Heart right ventricle (tissue), 16 donors: ENCODE measurements at regions of chr17 and their contacts with region 1.

Region 1: GRCh38 chr17:52106638-52107261 is 51.8 kb downstream of the CA10 start:
- DNase-seq: peak in 1 of 2 donors; percentile 8
- ATAC-seq: no peak
- H3K4me3 ChIP-seq: no peak overlapping the region
- H3K27ac ChIP-seq: no peak overlapping the region
- H3K4me1 ChIP-seq: no peaks in the 10 kb centered on the region
- H3K27me3 ChIP-seq: peaks cover 0 to 18% (median 3%) of the 10 kb centered on the region in 7 donors
- CTCF ChIP-seq: peak; percentile 26 to 81 (median 74)

Region 2: DNA sequence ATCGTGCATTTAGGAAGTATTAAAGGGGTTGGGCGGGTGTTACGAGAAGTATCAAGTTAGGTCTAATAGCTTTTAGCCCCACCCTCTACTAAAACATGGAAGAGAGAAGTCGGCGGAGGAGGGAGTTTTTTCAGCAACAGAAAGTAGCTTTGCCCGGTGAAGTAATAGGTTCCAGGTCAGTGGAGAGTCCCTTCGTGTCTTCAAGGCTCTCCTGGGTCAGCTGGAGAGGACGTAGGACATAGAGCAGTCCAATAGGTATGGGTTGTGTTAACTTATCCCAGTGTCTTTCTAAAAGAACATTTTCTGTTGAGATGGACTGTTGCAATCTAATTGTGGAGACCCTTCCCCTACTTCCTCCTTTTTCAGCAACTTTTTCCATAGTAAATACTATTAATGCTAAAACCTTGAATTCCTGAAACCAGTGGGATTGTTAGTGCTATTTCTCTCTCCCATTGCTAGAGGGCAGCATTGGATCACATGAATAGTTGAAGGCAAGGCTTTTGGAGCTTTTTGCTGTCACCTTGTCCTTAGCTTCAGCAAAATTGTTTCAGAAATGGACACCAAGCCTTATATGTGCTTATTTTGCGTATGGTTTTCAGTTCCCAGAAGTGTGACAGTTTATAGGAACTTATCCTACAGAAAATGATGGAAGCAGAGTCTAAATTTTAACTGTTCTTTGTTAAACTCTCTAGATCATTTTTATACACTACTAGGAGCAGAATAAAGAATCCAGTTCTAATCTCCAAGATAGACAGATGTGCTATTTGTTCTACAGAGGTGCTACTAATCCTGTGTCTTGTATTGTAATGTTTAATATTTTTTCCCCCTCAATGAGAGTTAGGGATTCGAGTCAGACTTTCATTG is 808.0 kb before region 1 on chr17:
- intact Hi-C with region 1: loop called in 1 of 10 experiments (anchors 5 kb)
- DNase-seq: no peak
- ATAC-seq: no peak
- H3K4me3 ChIP-seq: no peak overlapping the region
- H3K27ac ChIP-seq: no peak overlapping the region
- H3K4me1 ChIP-seq: no peaks in the 10 kb centered on the region
- H3K27me3 ChIP-seq: no peaks in the 10 kb centered on the region
- CTCF ChIP-seq: peak; percentile 23 to 74 (median 60)

Region 3: DNA sequence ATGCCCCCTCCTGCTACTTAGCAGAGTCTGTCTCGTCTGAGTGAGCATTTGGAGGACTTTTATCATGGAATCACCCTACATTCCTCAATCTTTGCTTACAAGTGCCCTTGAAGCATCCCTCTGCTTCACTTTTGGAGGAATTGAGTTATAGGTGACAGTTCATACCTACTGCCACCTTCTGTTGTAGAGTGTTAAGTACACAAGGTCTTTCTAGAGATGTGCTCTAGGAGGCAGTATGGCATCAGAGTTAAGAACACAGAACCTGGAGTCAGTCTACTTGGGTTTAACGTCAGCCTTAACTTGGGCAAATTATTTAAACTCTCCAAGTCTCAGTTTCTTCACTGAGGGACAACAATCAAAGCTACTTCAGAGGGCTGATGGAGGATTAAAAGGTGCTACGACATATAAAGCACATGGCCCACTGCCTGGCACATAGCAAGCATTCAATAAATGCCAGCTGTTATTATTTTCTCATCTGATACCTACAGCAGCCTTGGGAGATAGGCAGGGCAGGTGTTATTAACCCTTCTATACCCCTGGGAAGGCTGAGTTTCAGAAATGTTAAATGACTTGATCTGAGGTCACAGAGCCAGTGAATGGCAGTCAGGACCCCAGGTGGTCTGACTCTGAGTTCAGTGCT is 784.2 kb before region 1 on chr17:
- intact Hi-C with region 1: loop called in 1 of 10 experiments (anchors 10 kb)
- DNase-seq: no peak
- ATAC-seq: no peak
- H3K4me3 ChIP-seq: no peak overlapping the region
- H3K27ac ChIP-seq: no peak overlapping the region
- H3K4me1 ChIP-seq: no peaks in the 10 kb centered on the region
- H3K27me3 ChIP-seq: peaks cover 0 to 16% (median 0%) of the 10 kb centered on the region in 7 donors
- CTCF ChIP-seq: peak in 5 of 9 donors; percentile 16 to 39 (median 19)

Region 4: GRCh38 chr17:51585514-51586104 is 521.1 kb before region 1 on chr17:
- intact Hi-C with region 1: loop called in 1 of 10 experiments (anchors 10 kb)
- DNase-seq: no peak
- ATAC-seq: no peak
- H3K4me3 ChIP-seq: no peak overlapping the region
- H3K27ac ChIP-seq: no peak overlapping the region
- H3K4me1 ChIP-seq: no peaks in the 10 kb centered on the region
- H3K27me3 ChIP-seq: peaks cover 0 to 11% (median 0%) of the 10 kb centered on the region in 7 donors
- CTCF ChIP-seq: peak; percentile 16 to 68 (median 44)

Region 5: DNA sequence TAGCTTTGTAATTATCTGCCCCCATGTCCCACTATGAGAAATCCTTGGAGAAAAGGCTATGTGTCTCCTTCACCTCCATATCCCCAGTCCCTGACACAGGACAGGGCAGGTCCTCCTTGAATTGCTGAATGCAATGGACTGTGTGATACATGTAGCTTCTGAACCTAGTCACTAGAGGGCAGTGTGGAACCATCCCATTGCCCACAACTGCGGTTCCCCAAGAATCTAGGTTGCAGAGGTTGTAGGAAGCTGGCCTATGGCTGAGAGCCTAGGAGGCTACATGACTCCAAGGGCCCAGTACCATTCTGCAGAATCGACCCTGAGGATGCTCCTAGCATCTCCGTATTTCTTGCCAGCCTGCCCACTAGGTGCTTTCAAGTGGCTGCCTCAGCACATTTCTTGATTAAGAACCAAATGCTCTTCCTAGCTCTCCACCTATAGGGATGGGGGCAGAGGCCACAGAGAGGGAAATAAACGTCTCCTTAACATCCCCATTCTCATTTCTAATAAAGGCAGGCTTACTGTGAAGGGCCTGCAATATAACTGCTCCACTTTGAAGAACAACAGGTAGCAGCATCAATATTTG is 342.3 kb before region 1 on chr17:
- intact Hi-C with region 1: loop called in 9 of 10 experiments (anchors 5 to 10 kb)
- DNase-seq: peak in 1 of 2 donors; percentile 32
- ATAC-seq: peak in 6 of 8 donors; percentile 60 to 83 (median 70)
- H3K4me3 ChIP-seq: no peak overlapping the region
- H3K27ac ChIP-seq: no peak overlapping the region
- H3K4me1 ChIP-seq: no peaks in the 10 kb centered on the region
- H3K27me3 ChIP-seq: peaks cover 0 to 44% (median 14%) of the 10 kb centered on the region in 7 donors
- CTCF ChIP-seq: peak; percentile 45 to 88 (median 80)

Region 6: GRCh38 chr17:51869387-51869786 is 237.4 kb before region 1 on chr17:
- intact Hi-C with region 1: no loop called
- DNase-seq: no peak
- ATAC-seq: no peak
- H3K4me3 ChIP-seq: no peak overlapping the region
- H3K27ac ChIP-seq: no peak overlapping the region
- H3K4me1 ChIP-seq: no peaks in the 10 kb centered on the region
- H3K27me3 ChIP-seq: no peaks in the 10 kb centered on the region
- CTCF ChIP-seq: no peak

Region 7: DNA sequence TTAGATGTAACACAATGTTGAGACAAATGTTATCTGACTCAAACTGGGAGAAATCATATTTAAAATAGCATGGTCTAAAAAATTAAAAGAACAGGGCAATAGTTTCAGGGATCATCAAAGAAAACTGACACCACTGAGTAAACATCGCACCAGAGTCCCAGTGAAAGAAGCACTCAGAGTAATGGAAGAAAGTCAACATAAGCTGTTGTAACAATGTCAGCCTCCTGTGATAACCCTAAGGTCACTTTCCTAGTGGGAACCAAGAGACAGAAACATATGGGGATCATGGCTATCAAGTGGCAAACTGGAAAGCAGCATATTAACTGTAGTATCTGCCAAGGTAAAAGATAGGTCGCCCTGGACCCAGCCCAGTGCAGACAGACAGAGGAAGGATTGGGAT is 109.0 kb before region 1 on chr17:
- intact Hi-C with region 1: no loop called
- DNase-seq: no peak
- ATAC-seq: no peak
- H3K4me3 ChIP-seq: no peak overlapping the region
- H3K27ac ChIP-seq: no peak overlapping the region
- H3K4me1 ChIP-seq: no peaks in the 10 kb centered on the region
- H3K27me3 ChIP-seq: no peaks in the 10 kb centered on the region
- CTCF ChIP-seq: no peak

Region 8: GRCh38 chr17:52064791-52065211 is 41.9 kb before region 1 on chr17:
- intact Hi-C with region 1: loop called in 1 of 10 experiments (anchors 1 kb)
- DNase-seq: no peak
- ATAC-seq: no peak
- H3K4me3 ChIP-seq: no peak overlapping the region
- H3K27ac ChIP-seq: no peak overlapping the region
- H3K4me1 ChIP-seq: no peaks in the 10 kb centered on the region
- H3K27me3 ChIP-seq: peaks cover 0 to 3% (median 0%) of the 10 kb centered on the region in 7 donors
- CTCF ChIP-seq: no peak

Region 9: GRCh38 chr17:52157603-52158449 is 51.1 kb after region 1 on chr17:
- intact Hi-C with region 1: no loop called
- DNase-seq: no peak
- ATAC-seq: no peak
- H3K4me3 ChIP-seq: no peak overlapping the region
- H3K27ac ChIP-seq: no peak overlapping the region
- H3K4me1 ChIP-seq: peaks cover 0 to 7% (median 0%) of the 10 kb centered on the region in 9 donors
- H3K27me3 ChIP-seq: peaks cover 17 to 91% (median 65%) of the 10 kb centered on the region in 7 donors
- CTCF ChIP-seq: no peak